ENCODE measurements at regions of chr11 and their contacts with region 1.

Region 1: DNA sequence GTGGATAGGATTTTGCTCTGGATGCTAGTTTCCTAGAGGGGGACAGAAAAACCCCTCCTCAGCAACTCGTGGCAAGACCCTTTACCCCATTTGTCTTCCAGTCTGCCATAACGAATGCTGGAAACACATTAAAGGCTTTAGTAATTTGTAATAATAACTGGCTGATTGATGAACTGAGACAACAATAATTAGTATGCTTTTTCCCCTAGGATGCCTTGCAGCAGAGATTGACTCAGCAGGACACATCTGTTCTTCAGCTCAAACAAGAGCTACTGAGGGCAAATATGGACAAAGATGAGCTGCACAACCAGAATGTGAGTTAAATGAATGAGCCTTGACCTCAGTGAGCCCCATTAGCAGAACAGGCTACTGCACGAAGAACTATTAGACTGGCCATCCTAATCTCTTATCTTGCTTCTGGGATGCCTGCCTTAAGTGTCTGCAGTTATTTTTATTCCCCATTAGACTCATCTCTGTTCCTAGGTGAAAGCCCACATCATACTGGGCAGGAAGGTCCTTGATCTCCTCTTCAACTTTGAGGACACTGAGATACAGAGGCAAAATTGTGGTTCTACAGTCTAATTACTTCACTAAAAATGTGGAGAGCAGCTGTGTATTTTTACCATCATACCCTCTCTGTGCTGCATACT is 32.9 kb upstream of the DLAT start:
- DNase-seq: no peak
- ATAC-seq: no peak
- H3K4me3 ChIP-seq: no peak overlapping the region
- H3K27ac ChIP-seq: no peak overlapping the region
- H3K4me1 ChIP-seq: peaks cover 2% of the 10 kb centered on the region
- H3K27me3 ChIP-seq: no peaks in the 10 kb centered on the region
- CTCF ChIP-seq: no peak
- POLR2A ChIP-seq: no peak
- RAD21 ChIP-seq: no peak

Region 2: DNA sequence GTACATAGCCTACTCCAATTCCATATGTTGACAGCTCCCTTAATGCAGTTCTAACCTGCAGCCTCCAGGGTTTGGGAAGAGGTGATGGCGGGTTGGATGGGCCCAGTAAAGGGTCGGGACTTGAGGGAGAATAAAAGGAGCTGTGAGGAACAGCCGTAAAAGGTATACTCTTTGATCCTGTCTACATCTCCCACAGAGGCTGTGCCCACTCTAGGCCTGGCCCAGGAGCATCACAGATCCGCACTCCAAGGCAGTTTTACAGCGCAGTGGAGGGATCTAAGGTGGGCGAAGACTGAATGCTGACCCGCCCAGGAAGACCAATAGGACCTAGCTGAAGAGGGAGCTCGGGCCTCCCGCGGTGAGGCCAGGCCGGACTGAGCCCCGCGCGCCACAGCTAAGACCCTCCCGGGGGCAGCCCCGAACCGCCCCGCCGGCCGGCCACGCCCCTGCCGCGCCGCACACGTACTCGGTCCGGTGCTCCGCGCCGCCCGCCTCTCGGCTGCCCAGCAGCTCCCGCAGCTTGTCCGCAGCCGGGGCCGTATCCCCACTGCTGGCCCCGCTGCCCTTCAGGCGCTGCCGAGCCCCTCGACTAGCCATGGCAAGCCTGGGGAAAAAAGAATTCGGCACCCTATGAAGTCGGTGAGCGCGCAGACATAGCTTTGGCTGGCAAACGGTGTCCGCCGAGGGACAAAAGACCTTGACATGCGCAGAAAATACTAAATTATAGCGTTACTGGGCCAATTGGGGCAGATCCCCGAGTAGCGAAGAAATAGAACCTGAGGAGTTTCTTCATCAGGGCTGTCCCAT is 121.2 kb before region 1 on chr11 and contains the start of gene ALG9:
- CTCF ChIA-PET with region 1: interaction called, 4 read pairs
- POLR2A ChIA-PET with region 1: no interaction called
- dilution Hi-C with region 1: no loop called
- in situ Hi-C with region 1: loop called (anchors 5 kb)
- intact Hi-C with region 1: loop called (anchors 2 kb)
- DNase-seq: peak; percentile 82
- ATAC-seq: peak; percentile 99
- H3K4me3 ChIP-seq: peak within 1 kb of the TSS; percentile 94
- H3K27ac ChIP-seq: peak within 1 kb of the TSS; percentile 97
- H3K4me1 ChIP-seq: peaks cover 2% of the 10 kb centered on the region
- H3K27me3 ChIP-seq: no peaks in the 10 kb centered on the region
- CTCF ChIP-seq: peak; percentile 30; the same call in 1 of the 2 replicates
- POLR2A ChIP-seq: peak; percentile 20; the same call in 1 of the 2 replicates
- RAD21 ChIP-seq: no peak
- total RNA-seq, gene ALG9: 35.7 and 44.7 TPM in 2 replicates

Region 3: DNA sequence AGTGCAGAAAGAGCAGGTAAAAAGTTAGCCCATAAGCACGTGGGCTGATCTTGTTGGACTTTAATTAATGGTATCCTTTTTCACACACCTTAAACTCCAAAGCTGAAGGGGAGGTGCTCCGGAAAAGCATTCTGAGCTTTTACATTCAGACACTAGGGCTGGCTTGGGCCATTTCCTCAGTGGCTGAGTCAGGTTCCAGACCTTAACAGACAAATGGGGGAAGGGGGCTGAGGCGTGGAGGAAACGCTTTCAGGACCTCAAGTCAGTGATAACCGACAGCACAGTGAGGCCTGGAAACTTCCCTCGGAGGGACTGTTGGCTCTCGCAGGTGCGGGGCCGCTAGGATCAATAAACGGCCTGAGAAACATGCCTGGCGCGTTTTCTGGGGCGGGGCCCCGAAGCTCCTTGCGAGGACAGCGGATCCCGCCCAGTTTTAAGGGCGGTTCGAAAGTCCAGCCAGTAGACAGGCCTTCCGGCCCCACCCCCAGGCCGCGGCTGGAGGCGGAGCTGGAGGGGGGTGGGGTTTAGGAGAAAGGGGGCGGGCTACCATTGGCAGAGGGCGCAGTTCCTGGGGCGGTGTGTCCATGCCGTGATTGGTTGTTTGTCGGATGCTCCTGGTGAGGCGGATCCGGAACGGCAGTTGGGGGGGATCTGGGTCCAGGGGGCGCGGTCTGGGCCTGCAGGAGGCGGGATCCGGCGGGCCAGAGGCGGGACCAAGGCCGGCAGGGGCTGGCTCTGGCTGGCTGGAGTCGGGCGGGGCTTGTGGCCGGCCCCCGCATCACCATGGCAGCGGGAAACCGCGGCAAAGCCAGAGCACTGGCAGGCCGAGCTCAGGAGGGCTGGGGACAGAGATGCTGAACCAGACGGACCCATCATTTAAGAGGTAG is 65.6 kb before region 1 on chr11:
- CTCF ChIA-PET with region 1: interaction called, 7 read pairs
- POLR2A ChIA-PET with region 1: no interaction called
- dilution Hi-C with region 1: no loop called
- in situ Hi-C with region 1: no loop called
- intact Hi-C with region 1: loop called (anchors 1 kb)
- DNase-seq: peak; percentile 96
- ATAC-seq: peak; percentile 95
- H3K4me3 ChIP-seq: peak overlapping the region; percentile 46
- H3K27ac ChIP-seq: peak overlapping the region; percentile 79
- H3K4me1 ChIP-seq: peaks cover 12% of the 10 kb centered on the region
- H3K27me3 ChIP-seq: no peaks in the 10 kb centered on the region
- CTCF ChIP-seq: no peak
- POLR2A ChIP-seq: peak; percentile 74
- RAD21 ChIP-seq: no peak

Region 4: GRCh38 chr11:111938687-111939160 is 53.6 kb before region 1 on chr11:
- CTCF ChIA-PET with region 1: interaction called, 11 read pairs
- POLR2A ChIA-PET with region 1: no interaction called
- dilution Hi-C with region 1: no loop called
- in situ Hi-C with region 1: no loop called
- intact Hi-C with region 1: no loop called
- DNase-seq: peak; percentile 63
- ATAC-seq: peak; percentile 40
- H3K4me3 ChIP-seq: peak overlapping the region; percentile 1; the same call in 1 of the 2 replicates
- H3K27ac ChIP-seq: peak overlapping the region; percentile 53
- H3K4me1 ChIP-seq: peaks cover 28% of the 10 kb centered on the region
- H3K27me3 ChIP-seq: no peaks in the 10 kb centered on the region
- CTCF ChIP-seq: no peak
- POLR2A ChIP-seq: peak; percentile 44; the same call in 1 of the 2 replicates
- RAD21 ChIP-seq: no peak

Region 5: GRCh38 chr11:112421879-112422278 is 429.5 kb after region 1 on chr11:
- CTCF ChIA-PET with region 1: no interaction called
- POLR2A ChIA-PET with region 1: no interaction called
- dilution Hi-C with region 1: no loop called
- in situ Hi-C with region 1: no loop called
- intact Hi-C with region 1: no loop called
- DNase-seq: no peak
- ATAC-seq: no peak
- H3K4me3 ChIP-seq: no peak overlapping the region
- H3K27ac ChIP-seq: no peak overlapping the region
- H3K4me1 ChIP-seq: no peaks in the 10 kb centered on the region
- H3K27me3 ChIP-seq: peaks cover 7% of the 10 kb centered on the region; the same call in 1 of the 2 replicates
- CTCF ChIP-seq: no peak
- POLR2A ChIP-seq: no peak
- RAD21 ChIP-seq: no peak

Region 6: GRCh38 chr11:112817376-112817775 is 825.0 kb after region 1 on chr11:
- CTCF ChIA-PET with region 1: no interaction called
- POLR2A ChIA-PET with region 1: no interaction called
- dilution Hi-C with region 1: no loop called
- in situ Hi-C with region 1: no loop called
- intact Hi-C with region 1: no loop called
- DNase-seq: no peak
- ATAC-seq: no peak
- H3K4me3 ChIP-seq: no peak overlapping the region
- H3K27ac ChIP-seq: no peak overlapping the region
- H3K4me1 ChIP-seq: no peaks in the 10 kb centered on the region
- H3K27me3 ChIP-seq: no peaks in the 10 kb centered on the region
- CTCF ChIP-seq: no peak
- POLR2A ChIP-seq: no peak
- RAD21 ChIP-seq: no peak

Measured in IMR-90 (cell line).